AG04449 (cell line): ENCODE measurements at regions of chr9 and their contacts with region 1.

Region 1: DNA sequence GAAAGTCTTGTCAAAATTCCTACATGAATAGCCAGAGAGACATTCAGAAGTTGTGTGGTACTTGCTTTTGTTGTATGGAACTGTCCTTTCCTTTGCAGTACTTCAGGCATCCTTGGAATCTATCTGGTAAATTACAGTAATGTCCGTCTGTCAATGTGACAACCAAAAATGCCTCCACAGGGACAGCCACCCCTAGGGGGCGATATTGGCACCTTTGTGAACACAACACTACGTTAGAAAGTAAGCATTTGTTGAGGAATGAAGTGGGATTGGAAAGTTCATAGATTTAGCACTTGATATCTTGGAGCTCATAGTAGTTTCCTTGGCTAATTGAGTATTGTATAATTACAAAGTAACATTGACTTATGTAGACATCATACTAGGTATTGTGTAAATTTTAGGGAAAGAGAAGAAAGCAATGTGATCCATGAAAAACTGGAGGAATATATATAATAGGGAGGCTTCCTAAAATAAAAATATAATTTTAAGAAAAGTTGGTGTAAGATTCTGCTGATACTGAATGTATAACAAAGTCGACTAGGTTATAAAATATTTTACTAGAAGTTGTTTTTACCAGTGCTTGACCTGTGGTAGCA is 32.7 kb downstream of the TMEFF1 start:
- DNase-seq: no peak
- H3K4me3 ChIP-seq: no peak overlapping the region
- CTCF ChIP-seq: peak; percentile 60

Region 2: DNA sequence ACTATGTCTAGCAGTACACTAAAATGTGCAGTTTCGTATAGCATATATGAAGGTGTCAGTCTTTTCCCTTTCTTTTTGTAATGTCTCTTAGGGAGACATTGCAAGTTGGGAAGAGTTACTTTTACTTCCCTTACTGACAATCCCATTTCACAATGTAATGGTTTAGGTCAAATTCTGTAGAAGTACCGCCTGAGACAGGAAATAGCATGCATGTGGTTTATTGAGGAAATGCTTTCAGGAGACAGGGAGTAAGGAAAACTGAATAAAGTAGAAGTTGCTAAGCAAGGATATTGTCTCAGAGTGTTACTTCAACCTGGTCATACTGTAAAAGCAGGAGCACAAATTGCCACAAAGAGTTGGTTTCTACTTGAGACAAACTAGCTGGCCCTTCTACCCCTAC is 110.8 kb before region 1 on chr9:
- CTCF ChIA-PET with region 1: no interaction called
- POLR2A ChIA-PET with region 1: no interaction called
- DNase-seq: no peak
- H3K4me3 ChIP-seq: no peak overlapping the region
- CTCF ChIP-seq: no peak

Region 3: GRCh38 chr9:100477241-100477640 is 28.4 kb before region 1 on chr9:
- CTCF ChIA-PET with region 1: interaction called, 15 read pairs
- POLR2A ChIA-PET with region 1: no interaction called
- DNase-seq: no peak
- H3K4me3 ChIP-seq: no peak overlapping the region
- CTCF ChIP-seq: no peak

Region 4: DNA sequence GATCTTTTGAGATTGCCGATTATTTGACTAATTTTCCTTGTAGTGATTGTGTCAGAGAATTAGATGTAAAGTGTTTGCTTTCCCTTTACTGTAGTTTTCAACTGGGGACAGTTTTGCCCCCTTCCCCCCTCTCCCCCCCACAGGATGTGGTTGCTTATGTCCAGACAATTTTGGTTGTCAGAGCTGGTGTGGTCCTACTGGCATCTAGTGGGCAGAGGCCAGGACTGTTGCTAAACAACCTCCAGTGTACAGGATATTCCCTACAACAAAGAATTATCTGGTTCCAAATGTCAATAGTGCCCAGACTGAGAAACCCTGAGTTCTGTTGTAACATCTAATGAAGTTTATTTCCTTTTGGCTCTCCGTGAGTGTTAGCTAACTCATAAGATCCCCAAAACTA is 12.7 kb before region 1 on chr9:
- CTCF ChIA-PET with region 1: interaction called, 12 read pairs
- POLR2A ChIA-PET with region 1: no interaction called
- DNase-seq: no peak
- H3K4me3 ChIP-seq: no peak overlapping the region
- CTCF ChIP-seq: peak; percentile 11

Region 5: DNA sequence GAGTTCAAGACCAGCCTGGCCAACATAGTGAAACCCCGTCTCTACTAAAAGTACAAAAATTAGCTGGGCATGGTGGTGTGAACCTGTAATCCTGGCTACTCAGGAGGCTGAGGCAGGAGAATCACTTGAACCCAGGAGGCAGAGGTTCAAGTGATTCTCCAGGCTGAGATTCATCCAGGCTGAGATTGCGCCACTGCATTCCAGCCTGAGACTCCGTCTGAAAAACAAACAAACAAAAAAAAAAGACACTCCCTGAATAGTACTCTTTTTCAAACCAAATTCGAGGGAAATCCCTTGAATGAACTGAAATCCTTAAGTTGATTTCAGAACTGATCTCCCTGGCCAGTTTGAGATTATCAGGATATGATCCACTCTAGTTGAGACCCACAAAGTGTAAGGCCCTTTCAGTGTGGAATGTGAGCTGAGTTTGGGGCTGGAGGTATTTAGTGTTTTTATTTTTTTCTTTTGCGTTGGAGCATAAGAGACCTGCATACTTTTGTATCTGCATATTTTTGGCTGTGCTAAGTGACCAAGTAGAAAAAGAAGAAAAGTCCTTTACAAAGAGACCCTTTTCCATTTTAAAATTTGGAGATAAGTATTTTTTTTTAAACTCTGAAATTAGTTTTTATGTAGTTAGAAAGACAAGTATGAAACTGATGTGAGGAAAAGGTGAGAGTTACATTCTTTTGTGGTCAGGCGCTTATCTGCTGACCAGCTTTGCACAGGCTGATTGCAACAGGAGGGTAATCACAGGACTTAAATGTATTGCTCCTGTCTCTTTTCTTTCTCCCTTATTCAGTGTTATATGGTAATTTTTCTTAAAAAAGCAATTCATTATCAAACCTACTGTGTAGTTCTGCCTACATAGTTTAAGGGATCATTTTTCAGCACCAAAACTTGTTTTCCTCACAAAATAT is 10.2 kb after region 1 on chr9:
- CTCF ChIA-PET with region 1: interaction called, 15 read pairs
- POLR2A ChIA-PET with region 1: no interaction called
- DNase-seq: no peak
- H3K4me3 ChIP-seq: no peak overlapping the region
- CTCF ChIP-seq: no peak